CD4-positive, alpha-beta T cell (primary cell): ENCODE measurements at regions of chr3 and their contacts with region 1.

Region 1: DNA sequence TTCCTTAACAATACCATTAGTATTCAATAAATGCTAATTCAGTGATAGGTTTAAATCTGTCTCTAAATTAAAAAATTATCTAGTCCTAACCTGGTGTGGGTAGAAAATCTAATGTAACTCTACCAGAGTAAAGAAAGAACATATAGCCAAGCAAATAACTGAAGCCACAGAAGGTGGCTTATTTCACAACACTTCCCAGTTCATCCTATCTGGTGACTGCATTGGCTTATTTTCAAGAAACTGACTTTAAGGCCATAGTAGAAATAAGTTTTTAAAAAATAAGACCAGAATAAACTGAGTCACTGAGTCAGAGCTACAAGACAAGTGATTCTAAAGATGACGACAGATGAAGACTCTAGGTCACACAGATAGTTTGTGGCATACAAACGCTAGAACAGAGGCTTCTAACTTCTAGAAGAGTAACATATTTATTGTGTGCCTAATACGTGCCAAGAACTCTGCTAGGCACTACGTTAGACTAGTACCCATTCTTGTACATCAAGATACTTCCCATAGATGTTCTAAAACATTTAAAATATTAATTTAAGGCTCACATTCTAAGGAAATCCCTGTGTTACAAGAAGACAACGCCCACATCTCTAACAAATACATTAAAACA is 25.9 kb downstream of the TMCC1 start:
- DNase-seq: no peak
- ATAC-seq: no peak
- H3K4me3 ChIP-seq: no peak overlapping the region
- H3K4me3 Mint-ChIP-seq: no peak overlapping the region
- H3K27ac ChIP-seq: no peak overlapping the region
- H3K27ac Mint-ChIP-seq: no peak overlapping the region
- H3K4me1 ChIP-seq: no peaks in the 10 kb centered on the region
- H3K4me1 Mint-ChIP-seq: peaks cover 49% of the 10 kb centered on the region
- H3K27me3 ChIP-seq: no peaks in the 10 kb centered on the region
- H3K27me3 Mint-ChIP-seq: no peaks in the 10 kb centered on the region
- CTCF ChIP-seq: no peak

Region 2: DNA sequence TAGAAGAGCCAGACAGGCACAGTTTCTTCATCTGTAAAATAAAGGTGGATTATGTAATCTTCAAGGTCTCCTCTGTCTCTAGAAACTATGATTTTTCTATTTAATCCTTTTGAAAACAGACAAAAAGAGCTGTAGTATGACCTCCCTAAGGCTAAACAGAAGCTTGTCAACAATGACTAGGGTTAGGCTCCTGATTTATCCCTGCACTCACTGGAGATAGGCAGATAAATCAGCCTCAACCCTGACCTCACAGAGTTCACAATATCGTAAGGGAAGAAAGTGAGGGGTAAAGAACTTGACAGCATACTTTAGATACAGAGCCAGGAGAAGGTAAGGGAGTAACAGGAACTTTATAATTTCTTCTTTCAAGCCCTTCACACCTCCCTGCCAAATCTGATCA is 98.9 kb before region 1 on chr3:
- CTCF ChIA-PET with region 1: no interaction called
- POLR2A ChIA-PET with region 1: no interaction called
- intact Hi-C with region 1: no loop called
- DNase-seq: no peak
- ATAC-seq: no peak
- H3K4me3 ChIP-seq: no peak overlapping the region
- H3K4me3 Mint-ChIP-seq: no peak overlapping the region
- H3K27ac ChIP-seq: no peak overlapping the region
- H3K27ac Mint-ChIP-seq: no peak overlapping the region
- H3K4me1 ChIP-seq: no peaks in the 10 kb centered on the region
- H3K4me1 Mint-ChIP-seq: peaks cover 5% of the 10 kb centered on the region
- H3K27me3 ChIP-seq: no peaks in the 10 kb centered on the region
- H3K27me3 Mint-ChIP-seq: no peaks in the 10 kb centered on the region
- CTCF ChIP-seq: no peak

Region 3: GRCh38 chr3:129908381-129908780 is 40.8 kb after region 1 on chr3:
- CTCF ChIA-PET with region 1: no interaction called
- POLR2A ChIA-PET with region 1: no interaction called
- intact Hi-C with region 1: loop called in 1 of 2 experiments (anchors 5 kb)
- DNase-seq: no peak
- ATAC-seq: no peak
- H3K4me3 ChIP-seq: no peak overlapping the region
- H3K4me3 Mint-ChIP-seq: no peak overlapping the region
- H3K27ac ChIP-seq: no peak overlapping the region
- H3K27ac Mint-ChIP-seq: no peak overlapping the region
- H3K4me1 ChIP-seq: no peaks in the 10 kb centered on the region
- H3K4me1 Mint-ChIP-seq: no peaks in the 10 kb centered on the region
- H3K27me3 ChIP-seq: no peaks in the 10 kb centered on the region
- H3K27me3 Mint-ChIP-seq: no peaks in the 10 kb centered on the region
- CTCF ChIP-seq: no peak